Activated T-helper 2 cell treated with anti-CD3 and anti-CD28 coated beads, Interferon-gamma antibody, Interleukin-2, Interleukin-4, amounts not matched to agents 10 μg/mL and 5 μg/mL and 100 μg/mL, durations not matched to agents 14 hours and 24 hours and 36 hours (primary cell): ENCODE measurements at regions of chr11 and their contacts with region 1.

Region 1: GRCh38 chr11:110349138-110349996 is 53.0 kb upstream of the RDX start:
- DNase-seq: peak; percentile 58
- H3K4me3 Mint-ChIP-seq: peak overlapping the region; percentile 61
- H3K27ac Mint-ChIP-seq: peak overlapping the region; percentile 96
- H3K4me1 Mint-ChIP-seq: peaks cover 66% of the 10 kb centered on the region
- H3K27me3 Mint-ChIP-seq: no peaks in the 10 kb centered on the region

Region 2: GRCh38 chr11:109984634-109985289 is 364.6 kb before region 1 on chr11:
- intact Hi-C with region 1: loop called (anchors 5 kb)
- DNase-seq: no peak
- H3K4me3 Mint-ChIP-seq: no peak overlapping the region
- H3K27ac Mint-ChIP-seq: peak overlapping the region; percentile 51
- H3K4me1 Mint-ChIP-seq: peaks cover 28% of the 10 kb centered on the region
- H3K27me3 Mint-ChIP-seq: peaks cover 15% of the 10 kb centered on the region

Region 3: DNA sequence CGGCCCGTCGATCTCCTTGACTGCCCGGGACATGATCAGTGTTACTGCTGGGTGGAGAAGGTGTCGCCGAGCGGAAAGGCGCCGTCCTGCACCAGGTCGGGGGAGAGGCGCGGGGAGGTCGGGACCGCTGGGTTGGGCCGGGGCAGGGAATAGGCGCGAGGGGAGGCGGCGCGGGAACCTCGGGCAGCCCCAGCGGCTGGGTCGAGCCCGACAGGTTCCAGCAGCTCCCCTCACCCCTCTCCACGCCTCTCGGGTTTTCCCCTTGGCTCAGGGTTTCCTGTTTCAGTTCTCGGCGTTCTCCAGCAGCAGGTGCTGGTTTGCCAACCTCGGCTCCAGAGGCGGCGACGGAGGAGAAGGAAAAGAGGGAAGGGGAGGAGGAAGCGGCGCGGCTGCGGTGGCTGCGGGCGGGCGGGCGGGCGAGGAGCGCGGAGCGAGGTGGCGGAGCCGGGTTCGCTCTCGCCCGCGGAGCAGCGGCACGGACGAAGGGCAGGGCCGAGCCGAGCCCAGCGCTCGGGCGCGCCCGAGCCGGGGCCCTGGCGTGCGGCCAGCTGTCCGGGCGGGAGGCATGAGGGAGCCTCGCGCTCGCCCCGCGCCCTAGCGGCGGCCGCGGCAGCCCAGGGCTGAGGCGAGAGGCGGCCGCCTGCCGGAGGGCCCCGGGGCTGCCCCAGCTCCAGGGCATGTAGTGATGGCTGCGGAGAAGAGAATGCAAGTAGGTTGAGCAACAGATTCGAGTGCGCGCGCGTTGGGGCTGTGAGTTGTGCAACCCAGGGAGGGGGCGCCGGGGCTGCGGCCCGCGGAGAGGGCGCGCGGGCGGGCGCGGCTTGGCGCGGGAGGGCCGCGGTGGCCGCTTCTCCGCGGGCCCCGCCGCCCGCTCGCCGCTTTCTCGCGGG is 256.6 kb before region 1 on chr11 and contains the start of gene ZC3H12C:
- intact Hi-C with region 1: loop called (anchors 5 kb)
- DNase-seq: peak; percentile 38
- H3K4me3 Mint-ChIP-seq: peak within 1 kb of the TSS; percentile 89
- H3K27ac Mint-ChIP-seq: peak within 1 kb of the TSS; percentile 95
- H3K4me1 Mint-ChIP-seq: peaks cover 36% of the 10 kb centered on the region
- H3K27me3 Mint-ChIP-seq: peaks cover 32% of the 10 kb centered on the region
- total RNA-seq, gene ZC3H12C: 16.7 and 17.5 TPM in 2 replicates

Region 4: GRCh38 chr11:110185121-110185591 is 164.2 kb before region 1 on chr11:
- intact Hi-C with region 1: no loop called
- DNase-seq: no peak
- H3K4me3 Mint-ChIP-seq: no peak overlapping the region
- H3K27ac Mint-ChIP-seq: no peak overlapping the region
- H3K4me1 Mint-ChIP-seq: peaks cover 3% of the 10 kb centered on the region
- H3K27me3 Mint-ChIP-seq: peaks cover 23% of the 10 kb centered on the region

Region 5: GRCh38 chr11:110311783-110312579 is 37.4 kb before region 1 on chr11:
- intact Hi-C with region 1: loop called (anchors 5 kb)
- DNase-seq: no peak
- H3K4me3 Mint-ChIP-seq: no peak overlapping the region
- H3K27ac Mint-ChIP-seq: peak overlapping the region; percentile 81
- H3K4me1 Mint-ChIP-seq: peaks cover 7% of the 10 kb centered on the region
- H3K27me3 Mint-ChIP-seq: no peaks in the 10 kb centered on the region

Region 6: DNA sequence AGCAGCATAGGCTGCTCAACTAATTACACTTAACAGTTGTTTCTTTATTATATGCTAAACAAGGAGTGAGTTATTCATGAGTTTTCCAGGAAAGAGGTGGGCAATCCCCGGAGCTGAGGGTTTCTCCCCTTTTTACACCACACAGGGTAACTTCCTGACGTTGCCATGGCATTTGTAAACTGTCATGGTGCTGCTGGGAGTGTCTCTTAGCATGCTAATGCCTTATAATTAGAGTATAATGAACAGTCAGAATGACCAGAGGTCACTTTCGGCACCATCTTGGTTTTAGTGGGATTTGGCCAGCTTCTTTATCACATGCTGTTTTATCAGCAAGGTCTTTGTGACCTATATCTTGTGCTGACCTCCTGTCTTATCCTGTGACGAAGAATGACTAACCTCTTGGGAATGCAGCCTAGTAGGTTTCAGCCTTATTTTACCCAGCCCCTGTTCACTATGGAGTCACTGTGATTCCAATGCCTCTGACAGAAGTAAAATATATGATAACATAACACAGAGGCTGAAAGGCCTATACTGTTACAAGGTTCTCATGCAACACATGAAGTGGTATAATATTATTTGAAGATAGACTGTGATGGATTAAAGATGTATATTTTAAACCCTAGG is 11.7 kb before region 1 on chr11:
- intact Hi-C with region 1: loop called (anchors 1 kb)
- DNase-seq: no peak
- H3K4me3 Mint-ChIP-seq: no peak overlapping the region
- H3K27ac Mint-ChIP-seq: peak overlapping the region; percentile 24
- H3K4me1 Mint-ChIP-seq: peaks cover 33% of the 10 kb centered on the region
- H3K27me3 Mint-ChIP-seq: no peaks in the 10 kb centered on the region

Region 7: DNA sequence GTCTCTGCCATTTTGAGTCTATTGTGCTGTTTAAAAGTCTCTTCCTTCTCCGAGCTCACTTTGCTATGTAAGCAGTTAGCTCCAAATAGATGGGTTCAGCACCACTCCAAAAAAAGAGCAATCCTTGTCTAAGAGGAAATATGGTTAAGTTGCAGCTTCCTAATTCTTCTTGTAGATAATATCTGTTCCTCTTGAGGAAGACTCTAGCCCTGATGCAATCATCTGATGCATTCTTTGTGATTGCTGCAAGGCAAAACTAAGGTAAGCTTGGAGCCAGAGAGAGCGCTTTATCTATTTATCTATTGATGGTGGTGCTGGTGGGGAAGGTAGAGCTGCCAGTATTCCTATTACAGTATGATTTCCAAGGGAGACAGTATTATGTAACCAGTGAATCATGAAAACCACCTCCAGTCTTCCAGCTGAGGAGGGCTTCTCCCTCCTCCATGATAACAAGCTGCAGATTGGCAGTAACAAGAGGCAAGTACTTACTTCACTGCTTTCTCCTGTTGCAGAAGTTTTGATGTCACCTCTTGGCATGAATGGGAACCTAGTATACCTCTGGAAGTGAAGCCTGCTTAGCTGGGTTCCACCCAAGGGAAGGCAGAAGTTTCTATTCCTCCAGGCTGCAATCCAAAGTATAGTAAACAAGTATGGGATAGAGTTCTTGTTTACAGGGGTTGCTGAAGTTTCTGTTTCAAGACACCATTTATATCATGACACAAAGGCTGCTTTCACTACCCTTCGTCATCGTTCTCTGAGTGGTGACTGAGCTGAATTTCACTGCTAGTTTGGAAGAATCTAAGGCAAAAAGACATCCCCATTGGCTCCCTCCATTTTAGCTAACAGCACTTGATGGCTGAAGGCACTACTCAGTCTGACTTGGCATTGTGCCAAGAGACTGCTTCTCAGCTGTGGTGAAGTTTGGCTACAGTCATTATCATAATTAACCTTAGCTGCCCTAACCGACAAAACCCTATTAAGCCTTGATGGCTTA is 130.0 kb after region 1 on chr11:
- intact Hi-C with region 1: no loop called
- DNase-seq: no peak
- H3K4me3 Mint-ChIP-seq: no peak overlapping the region
- H3K27ac Mint-ChIP-seq: no peak overlapping the region
- H3K4me1 Mint-ChIP-seq: peaks cover 3% of the 10 kb centered on the region
- H3K27me3 Mint-ChIP-seq: peaks cover 4% of the 10 kb centered on the region